ENCODE measurements at regions of chr3 and their contacts with region 1.

Region 1: DNA sequence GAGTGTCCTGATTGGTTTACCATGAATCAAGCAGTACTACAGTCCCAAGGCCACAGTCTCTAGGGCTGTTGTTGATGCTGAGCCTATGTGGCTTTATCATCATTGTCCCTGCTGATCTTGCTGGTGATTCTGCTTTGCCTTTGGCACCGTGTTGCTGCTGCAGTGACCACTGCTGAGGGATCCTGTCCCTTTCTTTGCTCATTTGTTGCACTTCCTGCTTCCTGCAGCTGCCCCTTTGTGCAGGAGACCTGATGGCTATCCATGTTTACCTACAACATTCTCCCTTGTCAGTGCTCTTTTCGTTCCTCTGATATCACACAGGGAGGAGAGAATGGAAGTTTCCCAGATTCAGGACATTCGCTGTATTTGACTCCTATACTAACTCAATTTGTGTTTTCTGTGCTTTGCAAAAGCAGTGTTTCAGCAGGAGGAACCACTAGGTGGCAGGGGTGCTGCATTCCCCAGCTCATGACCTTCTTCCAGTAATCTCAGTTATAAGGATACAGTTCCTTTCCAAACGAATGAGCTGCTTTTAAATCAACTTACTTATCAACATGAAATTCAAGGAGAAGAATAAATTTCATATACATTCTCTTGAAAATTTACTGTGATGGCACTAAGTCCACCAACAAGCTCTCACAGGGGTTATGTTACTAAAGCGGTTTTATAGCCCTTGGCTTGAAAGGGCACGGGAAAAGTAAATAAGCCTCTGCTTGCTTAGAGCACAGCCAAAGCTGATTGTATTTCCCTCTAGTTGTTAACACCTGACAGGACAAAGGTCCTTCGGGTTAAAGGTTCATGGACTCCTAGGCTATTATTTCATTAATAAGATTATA is 9.7 kb upstream of the THUMPD3 start:
- DNase-seq: peak; percentile 70
- H3K4me3 ChIP-seq: no peak overlapping the region; a peak in 1 of 4 replicates
- H3K27ac ChIP-seq: peak overlapping the region in 1 of 2 experiments; percentile 25; a peak in 2 of 4 replicates
- H3K4me1 ChIP-seq: peaks cover 0 to 6% of the 10 kb centered on the region in 2 experiments; a peak in 1 of 4 replicates
- H3K27me3 ChIP-seq: no peaks in the 10 kb centered on the region
- CTCF ChIP-seq: peak; percentile 95
- EP300 ChIP-seq: no peak
- RAD21 ChIP-seq: peak; percentile 92

Region 2: GRCh38 chr3:9340472-9340902 is 12.6 kb before region 1 on chr3:
- CTCF ChIA-PET with region 1: interaction called, 13 read pairs
- POLR2A ChIA-PET with region 1: no interaction called
- DNase-seq: no peak
- H3K4me3 ChIP-seq: no peak overlapping the region
- H3K27ac ChIP-seq: peak overlapping the region in 1 of 2 experiments; percentile 84; a peak in 2 of 4 replicates
- H3K4me1 ChIP-seq: peaks cover 4 to 9% of the 10 kb centered on the region in 2 experiments; a peak in 1 of 4 replicates
- H3K27me3 ChIP-seq: no peaks in the 10 kb centered on the region
- CTCF ChIP-seq: no peak
- EP300 ChIP-seq: peak; percentile 13 to 46; a peak in 1 of 4 replicates
- RAD21 ChIP-seq: no peak